CD8-positive, alpha-beta T cell (primary cell): ENCODE measurements at regions of chr13 and their contacts with region 1.

Region 1: GRCh38 chr13:110819203-110820014 is 95.5 kb downstream of the ANKRD10 start:
- DNase-seq: peak; percentile 58 to 87 (median 75)
- ATAC-seq: peak; percentile 79
- H3K4me3 ChIP-seq: no peak overlapping the region
- H3K4me3 Mint-ChIP-seq: no peak overlapping the region
- H3K27ac ChIP-seq: no peak overlapping the region
- H3K27ac Mint-ChIP-seq: no peak overlapping the region
- H3K4me1 ChIP-seq: no peaks in the 10 kb centered on the region
- H3K4me1 Mint-ChIP-seq: peaks cover 18% of the 10 kb centered on the region
- H3K27me3 ChIP-seq: no peaks in the 10 kb centered on the region
- H3K27me3 Mint-ChIP-seq: peaks cover 5% of the 10 kb centered on the region
- CTCF ChIP-seq: peak; percentile 98

Region 2: DNA sequence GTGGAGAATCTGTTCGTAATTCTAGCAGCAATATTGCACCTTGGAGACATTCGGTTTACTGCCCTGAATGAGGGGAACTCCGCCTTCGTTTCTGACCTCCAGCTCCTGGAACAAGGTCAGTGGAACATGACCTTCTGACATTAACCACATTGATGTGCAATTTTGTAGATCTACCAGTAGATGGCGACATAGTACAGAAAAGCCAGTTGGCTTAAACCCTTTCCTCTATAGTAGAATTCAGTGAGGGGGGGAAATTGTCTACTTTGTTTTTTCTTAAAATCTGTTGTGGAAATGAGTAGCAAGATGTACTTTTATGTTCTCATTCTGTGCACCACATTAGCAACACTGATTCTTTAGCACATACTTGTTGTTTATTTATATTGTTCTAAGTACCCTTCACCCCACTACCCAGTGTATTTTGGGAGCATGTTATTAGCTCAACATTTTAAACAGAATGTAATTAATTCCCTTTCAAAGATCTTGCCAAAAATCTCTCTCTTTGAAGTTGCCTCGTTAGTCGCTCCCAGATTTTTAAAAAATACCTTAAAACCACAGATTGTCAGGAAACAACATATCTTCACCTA is 1857.8 kb before region 1 on chr13:
- CTCF ChIA-PET with region 1: no interaction called
- POLR2A ChIA-PET with region 1: no interaction called
- intact Hi-C with region 1: loop called (anchors 5 kb)
- DNase-seq: peak in 5 of 9 experiments; percentile 5 to 57 (median 16)
- ATAC-seq: peak; percentile 52
- H3K4me3 ChIP-seq: no peak overlapping the region
- H3K4me3 Mint-ChIP-seq: no peak overlapping the region
- H3K27ac ChIP-seq: no peak overlapping the region
- H3K27ac Mint-ChIP-seq: no peak overlapping the region
- H3K4me1 ChIP-seq: no peaks in the 10 kb centered on the region
- H3K4me1 Mint-ChIP-seq: no peaks in the 10 kb centered on the region
- H3K27me3 ChIP-seq: no peaks in the 10 kb centered on the region
- H3K27me3 Mint-ChIP-seq: peaks cover 7% of the 10 kb centered on the region
- CTCF ChIP-seq: peak; percentile 97

Region 3: DNA sequence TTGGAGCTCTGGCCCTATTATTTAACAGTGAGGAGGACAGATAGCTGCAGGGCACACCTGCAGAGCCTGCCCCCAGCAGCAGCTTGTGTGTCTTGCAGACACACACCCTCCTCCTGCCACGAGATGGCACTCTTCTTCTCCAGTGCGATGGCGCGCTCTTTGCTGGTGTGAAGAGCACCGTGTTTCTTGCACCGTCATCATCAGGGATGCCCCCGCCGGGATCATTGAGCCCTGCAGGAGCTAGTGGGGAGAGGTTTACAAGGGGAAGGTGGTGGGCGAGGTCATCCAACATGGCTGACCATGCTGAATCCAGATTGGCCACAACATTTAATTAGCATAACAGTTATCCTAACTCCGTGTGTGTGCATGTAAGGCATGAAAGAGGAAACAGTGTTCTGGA is 363.5 kb before region 1 on chr13:
- CTCF ChIA-PET with region 1: interaction called, 7 read pairs
- POLR2A ChIA-PET with region 1: no interaction called
- intact Hi-C with region 1: loop called in 1 of 2 experiments (anchors 2 kb)
- DNase-seq: peak; percentile 18 to 73 (median 53)
- ATAC-seq: peak; percentile 70
- H3K4me3 ChIP-seq: no peak overlapping the region
- H3K4me3 Mint-ChIP-seq: peak overlapping the region; percentile 51
- H3K27ac ChIP-seq: no peak overlapping the region
- H3K27ac Mint-ChIP-seq: no peak overlapping the region
- H3K4me1 ChIP-seq: peaks cover 3% of the 10 kb centered on the region
- H3K4me1 Mint-ChIP-seq: peaks cover 6% of the 10 kb centered on the region
- H3K27me3 ChIP-seq: no peaks in the 10 kb centered on the region
- H3K27me3 Mint-ChIP-seq: peaks cover 27% of the 10 kb centered on the region
- CTCF ChIP-seq: peak; percentile 54

Region 4: GRCh38 chr13:110644892-110645521 is 174.4 kb before region 1 on chr13:
- CTCF ChIA-PET with region 1: interaction called, 10 read pairs
- POLR2A ChIA-PET with region 1: no interaction called
- intact Hi-C with region 1: loop called (anchors 1 kb)
- DNase-seq: peak in 8 of 9 experiments; percentile 11 to 73 (median 48)
- ATAC-seq: peak; percentile 94
- H3K4me3 ChIP-seq: no peak overlapping the region
- H3K4me3 Mint-ChIP-seq: no peak overlapping the region
- H3K27ac ChIP-seq: no peak overlapping the region
- H3K27ac Mint-ChIP-seq: no peak overlapping the region
- H3K4me1 ChIP-seq: no peaks in the 10 kb centered on the region
- H3K4me1 Mint-ChIP-seq: peaks cover 10% of the 10 kb centered on the region
- H3K27me3 ChIP-seq: no peaks in the 10 kb centered on the region
- H3K27me3 Mint-ChIP-seq: no peaks in the 10 kb centered on the region
- CTCF ChIP-seq: peak; percentile 11

Region 5: DNA sequence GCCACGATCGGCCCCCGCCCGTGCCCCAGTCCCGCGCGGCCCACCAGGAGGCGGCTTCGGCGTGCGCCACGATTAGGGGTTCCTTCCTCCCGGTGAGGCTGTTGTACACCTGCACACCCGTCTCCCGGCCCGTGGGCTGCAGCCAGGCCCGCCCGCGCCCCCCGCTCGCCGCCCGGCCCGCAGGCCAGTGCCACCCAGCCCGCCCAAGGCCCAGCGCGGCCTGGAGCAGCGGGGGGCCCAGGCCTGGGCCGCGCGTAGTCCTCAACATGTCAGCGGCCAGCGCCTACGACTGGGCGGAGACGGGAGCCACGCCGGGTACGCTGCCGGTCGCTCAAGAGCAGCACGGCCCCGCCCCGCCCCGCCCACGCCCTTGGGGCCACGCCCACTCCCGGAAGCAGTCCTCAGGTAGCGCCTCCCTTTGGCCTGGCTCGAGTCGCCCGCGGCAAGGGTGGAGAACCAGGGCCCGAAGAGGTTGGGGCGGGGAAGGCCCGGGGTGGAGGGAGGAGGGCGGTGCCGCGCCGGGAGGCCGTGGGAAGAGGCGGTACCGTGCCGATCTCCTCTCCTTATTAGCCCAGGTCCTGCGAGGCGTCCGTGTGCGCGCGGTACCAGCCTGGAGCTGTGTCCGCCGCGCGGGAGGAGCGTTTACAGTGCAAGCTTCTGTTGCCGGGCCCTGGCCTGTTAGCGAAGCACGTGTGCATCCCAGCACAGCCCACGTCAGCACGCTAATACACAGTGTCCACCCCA is 113.4 kb before region 1 on chr13 and contains the start of gene CARS2:
- CTCF ChIA-PET with region 1: no interaction called
- POLR2A ChIA-PET with region 1: no interaction called
- intact Hi-C with region 1: loop called (anchors 1 kb)
- DNase-seq: peak; percentile 86 to 97 (median 89)
- ATAC-seq: peak; percentile 90
- H3K4me3 ChIP-seq: peak within 1 kb of the TSS; percentile 64 to 76
- H3K4me3 Mint-ChIP-seq: peak within 1 kb of the TSS; percentile 95
- H3K27ac ChIP-seq: peak within 1 kb of the TSS; percentile 65 to 69
- H3K27ac Mint-ChIP-seq: peak within 1 kb of the TSS; percentile 88
- H3K4me1 ChIP-seq: peaks cover 41% of the 10 kb centered on the region
- H3K4me1 Mint-ChIP-seq: peaks cover 42% of the 10 kb centered on the region
- H3K27me3 ChIP-seq: no peaks in the 10 kb centered on the region
- H3K27me3 Mint-ChIP-seq: no peaks in the 10 kb centered on the region
- CTCF ChIP-seq: peak; percentile 32
- total RNA-seq, gene CARS2: 48.2 to 48.8 TPM

Region 6: DNA sequence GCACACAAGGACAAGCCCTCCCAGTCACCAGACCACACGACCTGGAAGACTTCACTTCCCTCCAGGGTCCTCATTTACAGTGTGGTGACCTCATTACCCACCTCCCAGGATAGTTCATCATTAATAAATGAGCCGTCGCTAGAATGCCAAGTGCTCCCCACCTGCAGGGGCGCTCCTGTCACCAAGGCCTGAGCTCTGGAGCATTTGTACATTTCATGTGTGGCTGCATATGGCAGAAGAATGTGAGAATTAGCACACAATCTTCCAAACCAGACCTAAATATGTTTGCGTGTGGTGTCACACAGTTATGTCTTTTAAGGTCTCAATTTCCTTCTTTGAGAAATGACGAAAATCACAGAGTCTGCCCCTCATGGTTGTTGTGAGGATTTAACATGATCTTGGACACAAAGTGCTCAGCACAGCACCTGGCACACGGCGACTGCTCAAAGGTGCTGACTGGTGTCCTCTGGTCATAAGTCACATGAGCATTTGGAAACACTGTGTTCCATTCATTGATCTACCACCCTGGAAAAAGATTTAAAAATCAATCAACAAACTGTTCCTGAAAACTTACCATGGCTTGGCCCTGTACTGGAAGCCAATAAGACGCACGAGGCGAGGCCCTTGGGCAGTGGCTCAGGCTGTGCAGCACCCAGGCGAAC is 1406.2 kb after region 1 on chr13:
- CTCF ChIA-PET with region 1: no interaction called
- POLR2A ChIA-PET with region 1: no interaction called
- intact Hi-C with region 1: no loop called
- DNase-seq: no peak
- ATAC-seq: no peak
- H3K4me3 ChIP-seq: no peak overlapping the region
- H3K4me3 Mint-ChIP-seq: no peak overlapping the region
- H3K27ac ChIP-seq: no peak overlapping the region
- H3K27ac Mint-ChIP-seq: no peak overlapping the region
- H3K4me1 ChIP-seq: no peaks in the 10 kb centered on the region
- H3K4me1 Mint-ChIP-seq: no peaks in the 10 kb centered on the region
- H3K27me3 ChIP-seq: no peaks in the 10 kb centered on the region
- H3K27me3 Mint-ChIP-seq: peaks cover 2% of the 10 kb centered on the region
- CTCF ChIP-seq: no peak